ENCODE measurements at regions of chr9 and their contacts with region 1.

Region 1: GRCh38 chr9:85702726-85703289 is 38.9 kb downstream of the AGTPBP1 start:
- DNase-seq: no peak
- ATAC-seq: peak in 5 of 8 donors; percentile 47 to 79 (median 63)
- H3K4me3 ChIP-seq: no peak overlapping the region
- H3K27ac ChIP-seq: no peak overlapping the region
- H3K4me1 ChIP-seq: peaks cover 0 to 25% (median 14%) of the 10 kb centered on the region in 9 donors
- H3K27me3 ChIP-seq: no peaks in the 10 kb centered on the region
- CTCF ChIP-seq: no peak

Region 2: GRCh38 chr9:85723215-85723614 is 20.4 kb after region 1 on chr9:
- intact Hi-C with region 1: loop called in 1 of 10 experiments (anchors 2 kb)
- DNase-seq: peak; percentile 26 to 36
- ATAC-seq: peak in 2 of 8 donors; percentile 21 to 29
- H3K4me3 ChIP-seq: no peak overlapping the region
- H3K27ac ChIP-seq: no peak overlapping the region
- H3K4me1 ChIP-seq: peaks cover 0 to 32% (median 5%) of the 10 kb centered on the region in 9 donors
- H3K27me3 ChIP-seq: no peaks in the 10 kb centered on the region
- CTCF ChIP-seq: no peak

Region 3: GRCh38 chr9:85741875-85742629 is 39.2 kb after region 1 on chr9 and contains the start of gene AGTPBP1:
- intact Hi-C with region 1: loop called in 4 of 10 experiments (anchors 5 to 10 kb)
- DNase-seq: peak; percentile 95 to 98
- ATAC-seq: peak; percentile 97 to 99 (median 99)
- H3K4me3 ChIP-seq: peak within 1 kb of the TSS; percentile 89 to 98 (median 97)
- H3K27ac ChIP-seq: peak within 1 kb of the TSS; percentile 57 to 97 (median 90)
- H3K4me1 ChIP-seq: peaks cover 0 to 60% (median 24%) of the 10 kb centered on the region in 9 donors
- H3K27me3 ChIP-seq: no peaks in the 10 kb centered on the region
- CTCF ChIP-seq: peak in 2 of 9 donors; percentile 3 to 8
- total RNA-seq, gene AGTPBP1: 43.6 to 87.1 (median 56.4) TPM